ENCODE measurements at regions of chr12 and their contacts with region 1.

Region 1: GRCh38 chr12:59113831-59114615 is 193.7 kb upstream of the LRIG3 start:
- DNase-seq: peak; percentile 68
- H3K4me3 Mint-ChIP-seq: no peak overlapping the region
- H3K27ac Mint-ChIP-seq: no peak overlapping the region
- H3K4me1 Mint-ChIP-seq: no peaks in the 10 kb centered on the region
- H3K27me3 Mint-ChIP-seq: no peaks in the 10 kb centered on the region

Region 2: DNA sequence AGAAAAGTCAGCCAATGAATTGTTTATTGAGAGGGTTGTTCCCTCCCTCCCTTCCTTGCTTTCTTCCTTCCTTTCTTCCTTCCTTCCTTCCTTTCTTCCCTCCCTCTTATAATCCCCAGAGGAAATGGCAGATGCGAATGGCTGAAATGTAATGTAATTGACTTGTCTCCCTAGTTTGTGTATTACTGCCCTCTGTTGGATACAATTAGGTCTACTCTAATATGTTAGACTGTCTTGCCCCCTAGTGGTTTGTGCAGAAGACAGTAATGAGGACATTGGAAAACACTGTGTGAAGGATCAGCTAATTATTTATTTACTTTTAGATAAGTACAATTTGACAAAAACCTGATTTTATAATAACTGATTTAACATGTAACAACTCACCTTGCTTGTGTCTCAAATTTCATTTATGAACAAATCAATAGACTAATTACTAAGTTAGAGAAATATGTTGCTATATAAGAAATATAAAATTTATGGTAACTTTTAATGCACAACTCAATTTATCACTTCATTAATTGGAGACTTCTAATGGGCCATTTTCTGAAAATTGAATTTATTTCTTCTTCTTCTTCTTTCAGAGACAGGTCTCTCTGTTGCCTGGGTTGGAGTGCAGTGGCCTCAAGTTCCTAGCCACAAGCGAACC is 36.1 kb after region 1 on chr12:
- CTCF ChIA-PET with region 1: interaction called, 4 read pairs
- POLR2A ChIA-PET with region 1: no interaction called
- intact Hi-C with region 1: loop called (anchors 1 kb)
- DNase-seq: no peak
- H3K4me3 Mint-ChIP-seq: no peak overlapping the region
- H3K27ac Mint-ChIP-seq: no peak overlapping the region
- H3K4me1 Mint-ChIP-seq: no peaks in the 10 kb centered on the region
- H3K27me3 Mint-ChIP-seq: no peaks in the 10 kb centered on the region

Measured in activated CD4-positive, alpha-beta memory T cell treated with anti-CD3 and anti-CD28 coated beads for 36 hours (primary cell).